PC-3 (cell line): ENCODE measurements at regions of chr6 and their contacts with region 1.

Region 1: DNA sequence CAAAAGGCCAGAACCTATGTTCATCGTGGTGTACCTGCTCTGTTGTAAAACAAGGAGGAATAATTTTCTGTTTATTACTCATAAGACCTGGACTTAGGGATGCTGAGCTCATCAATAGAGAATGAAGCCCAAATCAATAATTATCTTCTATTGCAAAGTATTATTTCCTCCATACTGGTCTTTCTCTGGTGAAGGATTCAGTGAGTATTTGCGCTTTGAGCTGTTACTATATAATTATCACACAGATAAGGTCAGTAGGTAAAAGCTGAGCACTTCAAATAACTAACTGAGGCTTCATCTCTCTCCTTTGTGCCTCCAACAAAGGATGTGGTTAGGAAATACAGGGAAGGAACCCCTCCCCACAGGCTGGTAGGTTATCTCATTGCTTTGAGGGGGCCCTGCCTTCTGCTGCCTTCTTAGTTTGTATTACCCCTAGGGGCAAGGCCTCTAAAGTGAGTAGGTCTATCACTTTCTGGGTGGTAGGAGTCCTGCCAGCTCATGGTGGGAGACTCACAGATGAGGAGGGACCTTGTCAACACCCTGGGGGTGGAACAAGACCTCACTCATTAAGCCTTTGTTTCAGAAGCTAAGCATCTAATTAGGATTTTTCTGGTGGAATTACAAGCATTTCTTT is 34.5 kb downstream of the EDN1 start:
- DNase-seq: peak; percentile 37
- ATAC-seq: peak; percentile 10
- H3K4me3 ChIP-seq: peak overlapping the region; percentile 14
- H3K27ac ChIP-seq: peak overlapping the region; percentile 97
- H3K4me1 ChIP-seq: peaks cover 48% of the 10 kb centered on the region
- H3K27me3 ChIP-seq: no peaks in the 10 kb centered on the region
- CTCF ChIP-seq: no peak

Region 2: DNA sequence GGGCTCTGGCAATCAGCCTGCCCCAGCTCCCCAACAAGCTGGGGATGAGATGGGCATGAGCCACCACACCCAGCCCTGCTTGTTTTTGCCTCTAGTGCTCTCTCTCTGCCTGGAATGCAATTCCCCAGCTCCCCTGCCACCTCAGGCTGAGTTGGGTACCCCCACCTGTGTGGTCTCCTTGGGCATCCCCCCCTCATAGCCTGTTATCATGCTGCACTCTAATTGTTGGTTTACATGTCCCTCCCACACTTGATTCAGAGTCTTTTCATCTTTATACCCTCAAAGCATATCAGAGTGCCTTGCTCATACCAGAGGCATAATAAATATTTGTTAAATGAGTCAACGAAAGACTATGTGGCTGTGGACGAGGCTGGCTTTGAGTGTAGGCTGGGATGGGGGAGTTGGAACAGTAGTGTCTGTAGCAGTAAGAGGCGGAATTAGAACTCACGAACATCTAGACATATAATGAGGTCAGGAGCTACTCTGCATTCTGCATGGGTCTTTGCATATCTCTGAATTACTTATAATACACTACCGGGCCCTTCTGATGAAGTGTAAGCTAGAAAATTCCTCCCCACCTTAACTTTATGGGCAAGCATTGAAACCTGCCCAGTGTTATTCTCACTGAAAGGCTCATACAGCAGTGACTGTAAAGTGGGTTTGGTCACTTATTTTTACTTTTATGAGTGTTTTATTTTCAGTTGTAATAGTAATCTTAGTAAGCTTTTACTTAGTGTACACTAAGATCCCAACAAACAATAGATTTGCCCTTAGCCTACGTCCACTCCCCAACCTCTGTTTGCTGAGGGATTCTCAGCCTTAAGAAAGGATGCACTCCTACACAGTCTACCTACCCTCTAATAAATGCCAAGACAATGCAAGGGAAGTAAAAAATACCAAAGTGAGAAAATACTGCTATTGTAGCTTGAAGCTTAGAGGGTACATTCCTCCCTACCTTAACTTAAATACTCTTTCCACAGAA is 24.2 kb after region 1 on chr6:
- CTCF ChIA-PET with region 1: interaction called, 4 read pairs
- POLR2A ChIA-PET with region 1: interaction called, 17 read pairs
- intact Hi-C with region 1: loop called (anchors 1 kb)
- DNase-seq: peak; percentile 96
- ATAC-seq: peak; percentile 97
- H3K4me3 ChIP-seq: peak overlapping the region; percentile 10; the same call in 1 of the 2 replicates
- H3K27ac ChIP-seq: peak overlapping the region; percentile 85
- H3K4me1 ChIP-seq: peaks cover 38% of the 10 kb centered on the region
- H3K27me3 ChIP-seq: no peaks in the 10 kb centered on the region
- CTCF ChIP-seq: no peak